ENCODE measurements at regions of chr1 and their contacts with region 1.

Region 1: DNA sequence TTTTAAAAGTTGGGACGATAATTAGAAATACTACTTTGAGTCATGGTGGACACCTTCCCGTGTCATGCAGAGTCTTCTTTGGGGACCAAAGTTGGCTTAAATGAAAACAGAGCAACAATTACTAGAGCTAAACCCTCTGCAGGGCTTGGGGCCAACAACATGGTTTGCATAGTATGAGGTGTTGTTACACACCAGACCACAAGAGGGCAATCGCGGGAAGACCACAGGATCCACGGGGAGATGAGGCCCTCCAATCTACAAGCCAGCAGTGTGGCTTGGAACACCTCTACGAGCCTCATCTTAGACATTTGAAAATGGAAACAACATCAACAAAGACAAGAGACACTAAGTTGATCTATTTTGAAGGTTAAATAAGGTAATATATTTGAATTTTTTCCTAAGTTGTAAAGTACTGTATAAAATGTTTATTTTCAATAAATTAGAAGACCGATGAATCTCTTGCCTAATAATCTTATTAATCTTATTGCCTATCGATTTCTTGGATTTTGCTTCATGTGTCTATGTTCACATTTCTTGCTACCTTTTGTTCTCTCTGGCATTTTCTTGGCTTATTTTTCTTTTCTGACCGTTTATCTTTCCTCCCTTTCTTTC is 8.2 kb upstream of the SMCP start:
- DNase-seq: peak; percentile 54
- H3K4me3 ChIP-seq: no peak overlapping the region
- H3K27ac ChIP-seq: no peak overlapping the region
- H3K4me1 ChIP-seq: peaks cover 3% of the 10 kb centered on the region
- H3K27me3 ChIP-seq: no peaks in the 10 kb centered on the region
- CTCF ChIP-seq: peak; percentile 83 to 86

Region 2: DNA sequence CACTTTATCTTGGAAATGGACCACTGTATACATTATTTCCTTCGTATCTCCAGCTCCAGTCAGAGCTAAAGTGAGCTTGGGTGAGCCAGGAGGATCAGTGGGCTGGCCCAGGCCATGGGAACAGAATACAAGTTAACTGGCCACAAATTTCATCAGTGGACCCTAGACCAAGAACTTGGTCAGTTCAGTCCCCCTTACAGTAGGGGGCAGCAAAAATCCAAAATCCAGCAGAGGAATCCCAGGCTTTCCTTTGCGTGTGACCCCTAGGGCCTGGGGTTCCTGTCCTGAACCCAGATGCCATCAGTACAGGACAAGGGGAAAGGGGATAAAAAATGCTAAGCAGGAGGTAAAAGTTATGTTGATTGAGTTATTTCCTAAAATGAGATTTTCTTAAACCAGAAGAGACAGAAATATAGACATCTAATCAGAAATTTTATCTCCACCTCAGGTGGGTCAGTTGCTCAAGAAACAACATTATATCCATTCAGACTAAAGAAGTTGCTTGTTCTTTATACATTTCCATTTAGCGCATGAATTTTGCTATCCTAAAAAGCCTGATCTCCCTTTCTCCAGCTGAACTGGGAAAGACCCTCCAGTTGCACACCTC is 383.4 kb before region 1 on chr1:
- CTCF ChIA-PET with region 1: no interaction called
- dilution Hi-C with region 1: no loop called
- in situ Hi-C with region 1: no loop called
- intact Hi-C with region 1: loop called (anchors 5 kb)
- DNase-seq: no peak
- H3K4me3 ChIP-seq: no peak overlapping the region
- H3K27ac ChIP-seq: no peak overlapping the region
- H3K4me1 ChIP-seq: peaks cover 16% of the 10 kb centered on the region
- H3K27me3 ChIP-seq: no peaks in the 10 kb centered on the region
- CTCF ChIP-seq: peak; percentile 34 to 58

Region 3: DNA sequence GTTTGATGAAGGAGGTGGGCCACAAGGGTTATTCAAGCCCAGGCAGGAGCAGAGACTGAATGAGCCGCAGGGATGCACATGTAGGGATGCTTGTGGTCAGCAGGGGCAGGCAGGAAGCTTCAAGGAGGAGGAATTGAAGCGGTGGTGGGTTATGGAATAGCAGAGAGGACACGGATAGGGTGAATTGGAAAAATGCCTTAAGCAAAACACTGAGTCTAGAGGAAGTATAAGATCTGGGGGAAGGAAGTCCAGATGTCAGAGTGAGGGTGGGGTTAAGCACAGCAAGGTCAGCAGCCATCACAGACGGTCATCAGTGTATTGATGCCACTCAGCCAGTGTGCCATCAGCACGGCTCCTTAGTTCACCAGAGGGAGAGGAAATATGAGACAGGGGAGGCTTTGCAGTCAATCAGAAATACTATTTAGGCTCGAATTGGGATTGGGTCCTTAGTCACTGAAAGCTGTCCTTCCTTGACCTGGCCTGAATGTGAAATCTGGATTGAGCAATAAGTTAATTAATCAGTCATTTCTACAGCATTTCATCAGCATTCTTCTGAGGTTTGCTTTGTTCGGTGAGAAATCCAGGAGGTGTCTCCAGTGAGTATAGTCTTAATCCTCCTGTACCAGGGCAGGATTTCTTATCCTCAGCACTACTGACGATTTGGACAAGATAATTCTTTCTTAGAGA is 100.9 kb before region 1 on chr1:
- CTCF ChIA-PET with region 1: no interaction called
- dilution Hi-C with region 1: no loop called
- in situ Hi-C with region 1: no loop called
- intact Hi-C with region 1: loop called (anchors 1 kb)
- DNase-seq: peak; percentile 59
- H3K4me3 ChIP-seq: no peak overlapping the region
- H3K27ac ChIP-seq: peak overlapping the region; percentile 57
- H3K4me1 ChIP-seq: peaks cover 28% of the 10 kb centered on the region
- H3K27me3 ChIP-seq: no peaks in the 10 kb centered on the region
- CTCF ChIP-seq: peak; percentile 14 to 30

Region 4: DNA sequence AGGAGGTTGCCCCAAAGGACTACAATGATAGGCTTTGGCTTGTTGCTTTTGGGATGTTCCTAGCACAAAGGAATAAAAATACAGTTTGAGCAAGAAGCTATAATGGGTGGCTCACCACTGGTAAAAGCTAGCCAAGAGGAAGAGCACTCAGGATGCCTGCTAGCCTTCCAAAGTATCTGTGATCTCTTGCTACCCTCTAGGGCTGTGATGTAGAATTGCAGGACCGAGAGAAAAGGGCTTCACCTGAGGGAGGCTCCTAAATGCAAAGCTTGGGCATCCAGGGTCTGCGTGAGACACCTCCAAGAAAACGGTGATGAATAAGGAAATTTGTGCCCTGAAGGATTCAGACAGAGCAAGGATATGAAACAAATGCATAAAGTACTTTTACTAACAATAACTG is 56.2 kb after region 1 on chr1:
- CTCF ChIA-PET with region 1: interaction called, 3 read pairs
- dilution Hi-C with region 1: no loop called
- in situ Hi-C with region 1: loop called (anchors 5 kb)
- intact Hi-C with region 1: loop called (anchors 1 kb)
- DNase-seq: peak; percentile 64
- H3K4me3 ChIP-seq: no peak overlapping the region
- H3K27ac ChIP-seq: no peak overlapping the region
- H3K4me1 ChIP-seq: peaks cover 12% of the 10 kb centered on the region
- H3K27me3 ChIP-seq: no peaks in the 10 kb centered on the region
- CTCF ChIP-seq: peak; percentile 84 to 89

Region 5: GRCh38 chr1:153192697-153193096 is 322.8 kb after region 1 on chr1:
- CTCF ChIA-PET with region 1: interaction called, 6 read pairs
- dilution Hi-C with region 1: no loop called
- in situ Hi-C with region 1: loop called (anchors 5 kb)
- intact Hi-C with region 1: loop called (anchors 1 kb)
- DNase-seq: peak; percentile 48
- H3K4me3 ChIP-seq: no peak overlapping the region
- H3K27ac ChIP-seq: no peak overlapping the region
- H3K4me1 ChIP-seq: peaks cover 7% of the 10 kb centered on the region
- H3K27me3 ChIP-seq: no peaks in the 10 kb centered on the region
- CTCF ChIP-seq: peak; percentile 82 to 90

Region 6: DNA sequence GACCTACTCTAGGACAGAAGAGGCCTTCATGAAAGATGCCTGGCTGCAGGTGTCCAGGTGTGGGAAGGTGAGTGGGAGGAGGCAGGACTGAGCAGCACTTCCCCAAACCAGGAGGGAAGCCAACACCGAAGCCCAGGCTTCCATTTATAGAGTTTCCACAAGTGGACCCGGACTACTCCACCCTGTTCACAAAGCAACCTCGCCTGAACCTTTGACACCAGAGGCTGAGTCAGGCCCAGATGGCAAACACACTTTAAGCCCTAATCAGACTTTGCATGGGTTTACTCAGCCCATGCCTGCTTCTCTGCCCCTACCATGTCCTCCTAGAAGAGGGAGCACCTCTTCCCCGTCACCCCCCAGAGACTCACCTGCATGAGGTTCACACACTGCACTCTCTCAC is 361.4 kb after region 1 on chr1:
- CTCF ChIA-PET with region 1: no interaction called
- dilution Hi-C with region 1: no loop called
- in situ Hi-C with region 1: no loop called
- intact Hi-C with region 1: loop called (anchors 1 kb)
- DNase-seq: peak; percentile 18
- H3K4me3 ChIP-seq: no peak overlapping the region
- H3K27ac ChIP-seq: no peak overlapping the region
- H3K4me1 ChIP-seq: no peaks in the 10 kb centered on the region
- H3K27me3 ChIP-seq: no peaks in the 10 kb centered on the region
- CTCF ChIP-seq: no peak

Measured in mammary epithelial cell (primary cell).